ENCODE measurements at regions of chr15 and their contacts with region 1.

Region 1: DNA sequence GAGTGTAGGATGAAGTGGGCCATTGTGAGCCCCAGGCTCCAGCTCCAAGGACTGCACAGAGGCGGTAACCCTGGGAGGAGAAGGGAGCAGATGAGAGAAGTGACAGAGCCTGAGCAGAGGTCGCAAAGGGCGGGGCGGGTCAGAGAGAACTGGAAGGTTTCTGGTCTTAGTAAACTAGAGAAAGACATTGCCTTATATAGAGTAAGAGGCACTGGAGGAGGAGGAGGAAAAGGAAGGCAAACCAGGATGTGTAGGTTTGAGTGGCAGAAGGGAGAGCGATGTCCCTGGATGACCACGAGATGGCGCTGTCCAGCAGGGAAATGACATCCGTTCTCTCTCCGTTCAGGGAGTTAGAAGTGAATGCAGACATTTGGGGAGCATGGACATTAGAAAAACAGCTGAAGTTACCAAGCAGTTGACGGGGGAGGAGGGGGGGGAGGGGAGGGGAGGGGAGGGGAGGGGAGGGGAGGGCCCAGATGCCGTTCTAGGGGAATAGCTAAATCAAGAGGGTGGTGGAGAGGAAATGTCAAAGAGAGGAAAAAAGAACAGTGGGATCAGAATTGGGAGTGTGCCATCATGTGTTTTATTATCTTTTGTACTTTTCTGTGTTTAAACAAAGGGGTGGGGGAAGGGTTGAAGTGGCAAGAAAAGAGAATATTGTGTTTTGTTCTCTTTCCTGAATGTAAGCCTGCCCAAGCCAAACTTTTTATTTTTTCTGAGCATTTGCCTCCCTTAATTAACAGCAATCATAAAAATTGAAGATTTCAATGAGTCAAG is 48.8 kb downstream of the STARD5 start:
- DNase-seq: peak; percentile 45 to 91 (median 87)
- ATAC-seq: peak; percentile 98
- H3K4me3 ChIP-seq: no peak overlapping the region
- H3K4me3 Mint-ChIP-seq: no peak overlapping the region
- H3K27ac ChIP-seq: no peak overlapping the region
- H3K27ac Mint-ChIP-seq: peak overlapping the region; percentile 80
- H3K4me1 ChIP-seq: peaks cover 29% of the 10 kb centered on the region
- H3K4me1 Mint-ChIP-seq: peaks cover 51% of the 10 kb centered on the region
- H3K27me3 ChIP-seq: no peaks in the 10 kb centered on the region
- H3K27me3 Mint-ChIP-seq: no peaks in the 10 kb centered on the region
- CTCF ChIP-seq: peak; percentile 64

Region 2: GRCh38 chr15:81216422-81216821 is 58.7 kb before region 1 on chr15:
- CTCF ChIA-PET with region 1: no interaction called
- POLR2A ChIA-PET with region 1: no interaction called
- intact Hi-C with region 1: no loop called
- DNase-seq: no peak
- ATAC-seq: no peak
- H3K4me3 ChIP-seq: no peak overlapping the region
- H3K4me3 Mint-ChIP-seq: no peak overlapping the region
- H3K27ac ChIP-seq: no peak overlapping the region
- H3K27ac Mint-ChIP-seq: no peak overlapping the region
- H3K4me1 ChIP-seq: no peaks in the 10 kb centered on the region
- H3K4me1 Mint-ChIP-seq: no peaks in the 10 kb centered on the region
- H3K27me3 ChIP-seq: no peaks in the 10 kb centered on the region
- H3K27me3 Mint-ChIP-seq: no peaks in the 10 kb centered on the region
- CTCF ChIP-seq: no peak

Region 3: DNA sequence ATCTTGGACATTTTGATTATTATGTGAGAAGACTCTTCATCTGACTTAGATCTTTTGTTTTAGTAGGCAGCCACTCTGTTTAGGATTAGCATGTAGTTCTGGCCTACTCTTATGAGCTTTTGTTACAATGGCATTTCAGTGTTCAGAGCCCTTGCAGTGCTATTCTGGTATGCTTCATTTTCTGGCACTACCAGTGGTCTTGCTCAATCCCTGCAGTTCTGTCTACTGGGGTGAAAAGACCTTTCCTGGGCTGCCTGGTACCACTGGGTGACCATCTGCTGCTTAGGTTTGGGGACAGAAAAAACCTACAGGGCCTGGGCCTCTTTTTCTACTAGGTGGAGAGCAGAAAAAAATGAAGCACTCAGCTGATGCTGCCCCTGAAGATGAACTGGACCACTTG is 35.9 kb before region 1 on chr15:
- CTCF ChIA-PET with region 1: no interaction called
- POLR2A ChIA-PET with region 1: no interaction called
- intact Hi-C with region 1: no loop called
- DNase-seq: no peak
- ATAC-seq: no peak
- H3K4me3 ChIP-seq: no peak overlapping the region
- H3K4me3 Mint-ChIP-seq: no peak overlapping the region
- H3K27ac ChIP-seq: no peak overlapping the region
- H3K27ac Mint-ChIP-seq: no peak overlapping the region
- H3K4me1 ChIP-seq: no peaks in the 10 kb centered on the region
- H3K4me1 Mint-ChIP-seq: no peaks in the 10 kb centered on the region
- H3K27me3 ChIP-seq: no peaks in the 10 kb centered on the region
- H3K27me3 Mint-ChIP-seq: no peaks in the 10 kb centered on the region
- CTCF ChIP-seq: no peak

Region 4: GRCh38 chr15:81286621-81287121 is 11.6 kb after region 1 on chr15:
- CTCF ChIA-PET with region 1: interaction called, 498 read pairs
- POLR2A ChIA-PET with region 1: interaction called, 14 read pairs
- intact Hi-C with region 1: loop called in 1 of 2 experiments (anchors 1 kb)
- DNase-seq: peak in 3 of 9 experiments; percentile 35 to 75 (median 53)
- ATAC-seq: peak; percentile 93
- H3K4me3 ChIP-seq: peak overlapping the region in 1 of 2 experiments; percentile 36
- H3K4me3 Mint-ChIP-seq: peak overlapping the region; percentile 75
- H3K27ac ChIP-seq: peak overlapping the region; percentile 48 to 88
- H3K27ac Mint-ChIP-seq: peak overlapping the region; percentile 98
- H3K4me1 ChIP-seq: peaks cover 83% of the 10 kb centered on the region
- H3K4me1 Mint-ChIP-seq: peaks cover 81% of the 10 kb centered on the region
- H3K27me3 ChIP-seq: no peaks in the 10 kb centered on the region
- H3K27me3 Mint-ChIP-seq: no peaks in the 10 kb centered on the region
- CTCF ChIP-seq: no peak

Region 5: DNA sequence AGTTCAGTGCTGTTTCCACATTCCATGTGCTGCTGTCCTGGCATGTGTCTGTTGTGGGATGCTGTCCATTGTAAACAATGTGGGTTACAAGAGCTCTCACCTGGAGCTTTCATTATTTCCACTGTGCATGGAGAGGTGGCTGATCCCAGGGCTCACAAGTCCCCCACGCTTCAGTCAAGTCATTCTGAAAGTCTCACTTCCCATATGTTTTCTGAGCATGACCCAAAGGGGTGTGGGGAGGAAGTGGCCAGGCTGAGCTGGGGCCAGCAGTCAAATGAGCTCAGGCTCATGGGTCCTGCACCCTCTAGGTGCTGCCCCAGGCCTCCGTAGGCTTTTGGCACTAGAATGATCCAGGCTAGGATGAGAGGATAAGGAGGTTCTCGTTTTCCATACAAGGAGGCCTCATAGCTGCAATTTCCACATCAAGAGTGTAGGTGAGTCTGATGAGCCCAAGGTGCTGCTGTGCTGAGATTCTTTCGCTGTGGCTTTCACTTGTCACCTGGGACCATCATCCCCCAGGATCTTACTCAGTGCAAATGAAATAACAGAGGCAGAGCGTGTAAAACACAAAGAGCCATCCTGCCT is 26.8 kb after region 1 on chr15:
- CTCF ChIA-PET with region 1: interaction called, 498 read pairs
- POLR2A ChIA-PET with region 1: interaction called, 9 read pairs
- intact Hi-C with region 1: loop called in 1 of 2 experiments (anchors 2 kb)
- DNase-seq: peak in 1 of 9 experiments; percentile 51
- ATAC-seq: no peak
- H3K4me3 ChIP-seq: peak overlapping the region; percentile 61 to 89
- H3K4me3 Mint-ChIP-seq: peak overlapping the region; percentile 92
- H3K27ac ChIP-seq: peak overlapping the region; percentile 28 to 92
- H3K27ac Mint-ChIP-seq: peak overlapping the region; percentile 98
- H3K4me1 ChIP-seq: peaks cover 58% of the 10 kb centered on the region
- H3K4me1 Mint-ChIP-seq: peaks cover 72% of the 10 kb centered on the region
- H3K27me3 ChIP-seq: no peaks in the 10 kb centered on the region
- H3K27me3 Mint-ChIP-seq: no peaks in the 10 kb centered on the region
- CTCF ChIP-seq: no peak

Region 6: GRCh38 chr15:81336568-81336967 is 61.4 kb after region 1 on chr15:
- CTCF ChIA-PET with region 1: interaction called, 434 read pairs
- POLR2A ChIA-PET with region 1: interaction called, 3 read pairs
- intact Hi-C with region 1: loop called (anchors 1 kb)
- DNase-seq: peak in 7 of 9 experiments; percentile 28 to 69 (median 46)
- ATAC-seq: peak; percentile 49
- H3K4me3 ChIP-seq: no peak overlapping the region
- H3K4me3 Mint-ChIP-seq: no peak overlapping the region
- H3K27ac ChIP-seq: no peak overlapping the region
- H3K27ac Mint-ChIP-seq: no peak overlapping the region
- H3K4me1 ChIP-seq: no peaks in the 10 kb centered on the region
- H3K4me1 Mint-ChIP-seq: peaks cover 15% of the 10 kb centered on the region
- H3K27me3 ChIP-seq: no peaks in the 10 kb centered on the region
- H3K27me3 Mint-ChIP-seq: no peaks in the 10 kb centered on the region
- CTCF ChIP-seq: peak; percentile 37

Region 7: DNA sequence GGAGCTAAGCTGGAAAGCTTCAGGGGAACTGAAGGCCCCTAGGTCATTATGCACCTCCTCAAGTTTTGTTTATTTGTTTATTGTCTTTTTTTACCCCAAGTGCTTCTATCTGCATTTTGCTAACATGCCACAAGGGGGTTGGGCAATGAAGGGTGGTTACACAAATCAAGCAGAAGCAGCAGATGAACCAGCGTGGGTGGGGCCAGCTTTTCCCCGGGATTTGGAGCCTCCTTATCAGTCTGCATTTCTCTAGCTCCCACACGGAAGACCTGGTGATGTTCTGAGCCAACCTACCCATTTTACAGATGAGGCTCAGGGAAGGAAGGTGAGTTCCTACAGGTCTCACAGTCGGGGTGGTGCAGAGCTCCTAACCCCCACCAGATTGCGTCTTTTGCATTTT is 82.1 kb after region 1 on chr15:
- CTCF ChIA-PET with region 1: interaction called, 11 read pairs
- POLR2A ChIA-PET with region 1: no interaction called
- intact Hi-C with region 1: no loop called
- DNase-seq: no peak
- ATAC-seq: no peak
- H3K4me3 ChIP-seq: no peak overlapping the region
- H3K4me3 Mint-ChIP-seq: no peak overlapping the region
- H3K27ac ChIP-seq: no peak overlapping the region
- H3K27ac Mint-ChIP-seq: no peak overlapping the region
- H3K4me1 ChIP-seq: no peaks in the 10 kb centered on the region
- H3K4me1 Mint-ChIP-seq: no peaks in the 10 kb centered on the region
- H3K27me3 ChIP-seq: no peaks in the 10 kb centered on the region
- H3K27me3 Mint-ChIP-seq: no peaks in the 10 kb centered on the region
- CTCF ChIP-seq: no peak

Region 8: GRCh38 chr15:81400640-81401236 is 125.6 kb after region 1 on chr15:
- CTCF ChIA-PET with region 1: interaction called, 113 read pairs
- POLR2A ChIA-PET with region 1: no interaction called
- intact Hi-C with region 1: loop called (anchors 1 kb)
- DNase-seq: peak in 3 of 9 experiments; percentile 17 to 73 (median 65)
- ATAC-seq: peak; percentile 62
- H3K4me3 ChIP-seq: no peak overlapping the region
- H3K4me3 Mint-ChIP-seq: no peak overlapping the region
- H3K27ac ChIP-seq: no peak overlapping the region
- H3K27ac Mint-ChIP-seq: no peak overlapping the region
- H3K4me1 ChIP-seq: no peaks in the 10 kb centered on the region
- H3K4me1 Mint-ChIP-seq: peaks cover 2% of the 10 kb centered on the region
- H3K27me3 ChIP-seq: no peaks in the 10 kb centered on the region
- H3K27me3 Mint-ChIP-seq: no peaks in the 10 kb centered on the region
- CTCF ChIP-seq: peak; percentile 78

Region 9: DNA sequence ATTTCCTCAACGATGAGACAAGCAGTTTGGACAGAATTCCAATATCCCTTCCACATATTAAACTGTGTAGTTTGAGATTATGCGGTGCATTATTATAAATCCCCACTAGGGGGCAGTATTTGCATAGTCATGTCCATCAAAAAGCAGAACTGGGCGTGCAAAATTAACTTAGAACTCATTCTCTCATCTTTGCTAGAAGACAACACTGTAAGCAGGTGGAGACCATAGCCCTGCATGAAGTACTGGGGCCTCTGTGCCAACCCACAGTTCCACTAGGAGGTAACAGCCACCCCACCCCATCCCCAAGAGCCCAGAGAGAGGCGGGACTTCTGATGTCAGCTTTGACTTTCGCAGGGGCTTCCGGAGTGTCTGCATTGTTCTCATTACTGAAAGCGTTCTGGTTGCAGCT is 205.5 kb after region 1 on chr15:
- CTCF ChIA-PET with region 1: no interaction called
- POLR2A ChIA-PET with region 1: no interaction called
- intact Hi-C with region 1: loop called in 1 of 2 experiments (anchors 10 kb)
- DNase-seq: peak in 4 of 9 experiments; percentile 47 to 61 (median 54)
- ATAC-seq: peak; percentile 23
- H3K4me3 ChIP-seq: no peak overlapping the region
- H3K4me3 Mint-ChIP-seq: peak overlapping the region; percentile 42
- H3K27ac ChIP-seq: no peak overlapping the region
- H3K27ac Mint-ChIP-seq: no peak overlapping the region
- H3K4me1 ChIP-seq: no peaks in the 10 kb centered on the region
- H3K4me1 Mint-ChIP-seq: no peaks in the 10 kb centered on the region
- H3K27me3 ChIP-seq: no peaks in the 10 kb centered on the region
- H3K27me3 Mint-ChIP-seq: no peaks in the 10 kb centered on the region
- CTCF ChIP-seq: peak; percentile 86